Body of pancreas (tissue), 4 donors: ENCODE measurements at regions of chr3 and their contacts with region 1.

Region 1: DNA sequence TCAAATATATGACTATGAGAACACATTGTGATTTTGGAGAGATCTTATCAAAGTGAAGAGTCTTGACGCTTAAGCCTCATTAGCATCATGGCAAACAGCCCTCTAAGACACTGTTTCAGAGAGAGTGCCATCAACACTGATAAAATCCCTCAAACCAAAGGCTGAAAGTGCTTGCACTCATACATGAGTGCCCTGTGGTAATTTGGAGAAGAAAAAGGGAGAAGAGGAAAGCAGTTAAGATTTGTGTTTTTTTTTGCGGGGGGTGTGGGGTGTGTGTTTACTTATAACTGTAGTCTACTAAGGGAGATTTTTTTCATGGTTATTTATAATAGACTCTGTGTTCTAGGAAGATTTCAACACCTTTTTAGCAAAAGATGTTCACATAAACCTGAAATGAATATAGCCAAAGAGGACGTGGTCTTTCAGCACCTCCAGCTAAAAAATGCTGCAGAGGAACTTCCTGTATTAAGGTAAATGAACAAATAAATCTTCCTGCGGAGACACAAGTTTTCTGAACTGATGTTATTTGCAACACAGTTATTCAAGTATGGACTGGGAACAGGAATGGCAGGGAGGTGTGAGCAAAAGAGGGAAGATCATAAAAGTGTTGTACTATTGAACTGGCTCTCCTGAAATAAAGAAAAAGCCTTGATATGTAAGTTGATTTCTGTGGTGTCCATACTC is 81.9 kb upstream of the TGFBR2 start:
- DNase-seq: no peak
- ATAC-seq: no peak
- H3K4me3 ChIP-seq: no peak overlapping the region
- H3K27ac ChIP-seq: no peak overlapping the region
- H3K4me1 ChIP-seq: peaks cover 5% of the 10 kb centered on the region
- H3K27me3 ChIP-seq: no peaks in the 10 kb centered on the region
- CTCF ChIP-seq: no peak
- POLR2A ChIP-seq: no peak

Region 2: GRCh38 chr3:30453360-30454039 is 71.0 kb before region 1 on chr3:
- intact Hi-C with region 1: no loop called
- DNase-seq: peak in 1 of 4 donors; percentile 58
- ATAC-seq: no peak
- H3K4me3 ChIP-seq: no peak overlapping the region
- H3K27ac ChIP-seq: no peak overlapping the region
- H3K4me1 ChIP-seq: no peaks in the 10 kb centered on the region
- H3K27me3 ChIP-seq: no peaks in the 10 kb centered on the region
- CTCF ChIP-seq: no peak
- POLR2A ChIP-seq: no peak

Region 3: DNA sequence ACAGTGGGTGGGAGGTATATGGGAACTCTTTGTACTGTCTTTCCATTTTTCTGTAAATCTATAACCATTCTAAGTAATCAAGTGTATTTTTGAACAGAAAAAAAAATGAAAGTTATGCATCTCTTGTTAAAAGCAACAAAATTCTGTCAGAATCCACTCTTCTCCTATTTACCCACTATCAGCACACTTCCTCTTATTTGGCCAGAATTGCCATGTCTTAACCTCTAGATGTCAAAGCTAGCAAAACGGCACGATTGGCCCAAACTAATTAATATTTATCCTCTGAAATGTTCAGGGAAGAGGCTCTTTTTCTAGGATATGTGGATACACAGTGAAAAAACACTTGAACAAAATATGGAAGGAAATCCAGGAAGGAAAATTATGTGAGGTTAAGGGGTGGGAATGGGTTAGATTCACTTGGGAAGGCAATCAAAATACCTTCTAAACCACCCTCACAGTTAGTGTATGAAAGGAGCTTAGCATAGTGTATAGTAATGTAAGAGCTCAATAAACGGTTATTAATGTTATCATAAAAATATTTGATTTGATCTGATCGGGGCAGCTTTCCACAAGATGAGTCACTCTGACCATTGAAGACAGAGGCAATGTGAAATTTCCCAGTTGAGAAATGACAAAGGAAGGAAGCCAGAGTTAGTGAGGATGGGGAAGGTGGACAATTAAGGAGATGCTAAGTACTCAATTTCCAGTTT is 61.8 kb after region 1 on chr3:
- intact Hi-C with region 1: no loop called
- DNase-seq: no peak
- ATAC-seq: no peak
- H3K4me3 ChIP-seq: no peak overlapping the region
- H3K27ac ChIP-seq: no peak overlapping the region
- H3K4me1 ChIP-seq: peaks cover 12% of the 10 kb centered on the region
- H3K27me3 ChIP-seq: no peaks in the 10 kb centered on the region
- CTCF ChIP-seq: no peak
- POLR2A ChIP-seq: no peak

Region 4: GRCh38 chr3:30628901-30629590 is 104.5 kb after region 1 on chr3:
- intact Hi-C with region 1: loop called (anchors 10 kb)
- DNase-seq: peak in 2 of 4 donors; percentile 40 to 52
- ATAC-seq: peak; percentile 61
- H3K4me3 ChIP-seq: no peak overlapping the region
- H3K27ac ChIP-seq: peak overlapping the region in 3 of 4 donors; percentile 33 to 52 (median 36)
- H3K4me1 ChIP-seq: peaks cover 72% of the 10 kb centered on the region
- H3K27me3 ChIP-seq: no peaks in the 10 kb centered on the region
- CTCF ChIP-seq: peak; percentile 9 to 53 (median 35)
- POLR2A ChIP-seq: no peak

Region 5: DNA sequence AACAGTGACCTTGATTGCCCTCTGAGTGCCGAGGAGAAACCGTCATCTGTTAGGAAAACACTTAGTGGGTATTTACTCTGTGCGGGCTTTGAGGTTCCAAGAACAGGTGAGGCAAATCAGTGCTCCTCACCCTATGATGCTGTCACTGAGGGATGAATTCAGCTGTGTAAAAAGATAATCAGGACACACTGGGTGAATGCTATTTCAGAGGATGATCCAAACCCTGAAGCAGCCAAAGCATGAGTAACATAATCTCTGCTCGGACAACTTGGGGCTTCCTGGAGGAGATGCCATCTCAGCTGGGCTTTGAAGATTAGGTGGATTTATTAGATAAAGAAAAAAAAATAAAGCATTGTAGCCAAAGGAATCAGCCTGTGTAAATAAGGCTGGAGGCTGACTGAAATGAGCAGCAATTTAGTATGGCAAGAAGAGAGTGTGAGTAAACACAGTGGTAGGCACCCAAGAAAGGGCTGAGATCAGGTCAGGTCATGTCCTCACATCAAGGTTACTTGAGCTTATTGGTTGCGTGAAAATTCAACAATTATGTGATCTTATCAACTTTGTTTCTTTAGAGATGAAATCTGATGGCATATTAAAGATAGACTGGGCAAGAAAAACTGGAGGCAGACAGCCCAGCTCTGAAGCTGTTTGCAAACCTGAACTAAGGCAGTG is 380.6 kb after region 1 on chr3:
- intact Hi-C with region 1: no loop called
- DNase-seq: no peak
- ATAC-seq: no peak
- H3K4me3 ChIP-seq: no peak overlapping the region
- H3K27ac ChIP-seq: no peak overlapping the region
- H3K4me1 ChIP-seq: no peaks in the 10 kb centered on the region
- H3K27me3 ChIP-seq: no peaks in the 10 kb centered on the region
- CTCF ChIP-seq: no peak
- POLR2A ChIP-seq: no peak